ENCODE measurements at regions of chr6 and their contacts with region 1.

Region 1: GRCh38 chr6:149863697-149864577 is at the start of gene LRP11:
- DNase-seq: peak; percentile 82 to 89
- ATAC-seq: peak; percentile 88 to 93 (median 91)
- H3K4me3 ChIP-seq: peak within 1 kb of the TSS; percentile 81
- H3K27ac ChIP-seq: peak within 1 kb of the TSS; percentile 94
- H3K4me1 ChIP-seq: peaks cover 23% of the 10 kb centered on the region
- H3K27me3 ChIP-seq: no peaks in the 10 kb centered on the region
- CTCF ChIP-seq: no peak
- total RNA-seq, gene LRP11: 7.9 to 29.6 (median 10.2) TPM

Region 2: DNA sequence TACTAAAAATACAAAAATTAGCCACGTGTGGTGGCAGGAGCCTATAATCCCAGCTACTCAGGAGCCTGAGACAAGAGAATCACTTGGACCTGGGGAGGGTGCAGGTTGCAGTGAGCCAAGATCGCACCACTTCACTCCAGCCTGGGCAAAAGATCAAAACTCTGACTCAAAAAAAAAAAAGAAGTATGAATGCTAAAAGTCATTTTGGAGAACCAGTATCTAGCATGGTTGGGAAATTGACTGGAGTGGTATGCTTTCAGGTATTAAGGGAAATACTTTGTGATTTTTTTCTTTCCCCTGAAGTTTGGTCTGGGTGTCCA is 84.3 kb before region 1 on chr6:
- intact Hi-C with region 1: no loop called
- DNase-seq: no peak
- ATAC-seq: peak in 1 of 4 donors; percentile 36
- H3K4me3 ChIP-seq: no peak overlapping the region
- H3K27ac ChIP-seq: no peak overlapping the region
- H3K4me1 ChIP-seq: no peaks in the 10 kb centered on the region
- H3K27me3 ChIP-seq: no peaks in the 10 kb centered on the region
- CTCF ChIP-seq: no peak

Region 3: DNA sequence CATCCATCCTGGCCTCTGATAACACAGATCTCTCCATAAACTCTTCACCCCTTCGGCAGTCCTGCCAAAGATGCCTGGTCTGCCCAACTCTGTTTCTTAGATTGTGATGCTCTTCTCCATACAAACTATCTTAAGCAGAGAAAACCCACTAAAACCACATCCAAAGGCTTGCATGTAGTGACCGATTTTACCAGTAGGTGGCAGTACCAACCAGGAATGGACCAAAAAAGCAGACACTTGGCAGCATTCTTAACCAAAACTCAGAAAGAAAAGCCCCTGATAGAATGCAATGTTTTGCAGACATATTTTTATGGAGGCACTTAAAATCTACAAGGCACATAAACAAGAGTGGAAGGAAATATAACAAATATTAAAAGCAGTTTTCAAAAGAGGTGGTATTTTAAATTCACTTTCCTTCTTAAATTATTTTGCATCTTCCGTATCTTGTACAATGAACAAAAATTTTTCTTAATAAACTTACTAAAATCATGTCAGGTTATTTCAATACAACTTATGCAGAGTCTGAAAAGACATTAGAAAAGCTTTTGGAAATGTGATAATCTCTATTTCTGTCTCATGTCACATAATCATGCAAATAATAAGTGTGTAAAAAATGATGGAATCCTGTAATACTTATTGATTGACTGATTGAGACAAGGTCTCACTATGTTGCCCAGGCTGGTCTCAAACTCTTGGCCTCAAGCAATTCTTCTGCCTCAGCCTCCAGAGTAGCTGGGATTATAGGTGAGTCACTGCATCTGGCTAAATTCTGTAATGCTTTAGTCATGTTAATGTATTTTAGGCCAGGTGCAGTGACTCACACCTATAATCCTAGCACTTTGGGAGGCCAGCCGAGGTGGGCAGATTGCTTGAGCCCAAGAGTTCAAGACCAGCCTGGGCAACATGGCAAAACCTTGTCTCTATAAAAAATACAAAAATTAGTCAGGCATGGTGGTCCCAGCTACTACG is 29.1 kb before region 1 on chr6:
- intact Hi-C with region 1: loop called (anchors 5 kb)
- DNase-seq: no peak
- ATAC-seq: peak; percentile 62 to 83 (median 76)
- H3K4me3 ChIP-seq: no peak overlapping the region
- H3K27ac ChIP-seq: no peak overlapping the region
- H3K4me1 ChIP-seq: no peaks in the 10 kb centered on the region
- H3K27me3 ChIP-seq: no peaks in the 10 kb centered on the region
- CTCF ChIP-seq: peak; percentile 94

Region 4: DNA sequence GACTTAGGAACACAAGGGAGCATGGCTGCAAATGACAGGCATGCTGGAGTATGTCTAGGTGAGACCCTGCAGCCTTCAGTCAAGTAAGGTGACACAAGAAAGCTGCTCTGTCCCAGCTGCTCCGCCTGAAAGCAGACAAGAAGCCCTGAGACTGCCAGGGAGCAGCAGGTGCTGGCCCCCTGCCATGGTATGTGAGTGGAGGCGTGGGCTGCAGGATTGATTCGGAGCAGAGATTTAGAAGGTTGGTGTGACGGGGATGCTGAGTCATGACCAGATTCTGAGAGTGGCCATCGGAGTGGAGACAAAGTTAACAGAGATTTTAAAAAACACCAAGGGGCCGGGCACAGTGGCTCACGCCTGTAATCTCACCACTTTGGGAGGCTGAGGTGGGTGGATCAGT is 17.6 kb before region 1 on chr6:
- intact Hi-C with region 1: loop called in 1 of 2 experiments (anchors 2 kb)
- DNase-seq: peak; percentile 58 to 73
- ATAC-seq: peak; percentile 63 to 75 (median 72)
- H3K4me3 ChIP-seq: no peak overlapping the region
- H3K27ac ChIP-seq: peak overlapping the region; percentile 81
- H3K4me1 ChIP-seq: peaks cover 32% of the 10 kb centered on the region
- H3K27me3 ChIP-seq: no peaks in the 10 kb centered on the region
- CTCF ChIP-seq: no peak

Region 5: GRCh38 chr6:149884215-149884614 is 20.3 kb after region 1 on chr6:
- intact Hi-C with region 1: loop called in 1 of 2 experiments (anchors 2 kb)
- DNase-seq: no peak
- ATAC-seq: no peak
- H3K4me3 ChIP-seq: no peak overlapping the region
- H3K27ac ChIP-seq: no peak overlapping the region
- H3K4me1 ChIP-seq: peaks cover 14% of the 10 kb centered on the region
- H3K27me3 ChIP-seq: no peaks in the 10 kb centered on the region
- CTCF ChIP-seq: no peak

Region 6: GRCh38 chr6:149895833-149896271 is 31.9 kb after region 1 on chr6:
- intact Hi-C with region 1: loop called in 1 of 2 experiments (anchors 2 kb)
- DNase-seq: peak; percentile 72 to 81
- ATAC-seq: peak; percentile 82 to 87 (median 84)
- H3K4me3 ChIP-seq: peak overlapping the region; percentile 19
- H3K27ac ChIP-seq: peak overlapping the region; percentile 88
- H3K4me1 ChIP-seq: peaks cover 40% of the 10 kb centered on the region
- H3K27me3 ChIP-seq: no peaks in the 10 kb centered on the region
- CTCF ChIP-seq: no peak